ENCODE measurements at regions of chr7 and their contacts with region 1.

Region 1: GRCh38 chr7:95511716-95512260 is 26.0 kb downstream of the ASB4 start:
- DNase-seq: peak; percentile 74
- ATAC-seq: peak; percentile 96
- H3K4me3 ChIP-seq: peak overlapping the region; percentile 14; the same call in 1 of the 2 replicates
- H3K27ac ChIP-seq: no peak overlapping the region
- H3K4me1 ChIP-seq: no peaks in the 10 kb centered on the region
- H3K27me3 ChIP-seq: 0 out of 2 replicates have a peak, but pooled peaks cover 3% of the 10 kb centered on the region
- CTCF ChIP-seq: peak; percentile 86

Region 2: DNA sequence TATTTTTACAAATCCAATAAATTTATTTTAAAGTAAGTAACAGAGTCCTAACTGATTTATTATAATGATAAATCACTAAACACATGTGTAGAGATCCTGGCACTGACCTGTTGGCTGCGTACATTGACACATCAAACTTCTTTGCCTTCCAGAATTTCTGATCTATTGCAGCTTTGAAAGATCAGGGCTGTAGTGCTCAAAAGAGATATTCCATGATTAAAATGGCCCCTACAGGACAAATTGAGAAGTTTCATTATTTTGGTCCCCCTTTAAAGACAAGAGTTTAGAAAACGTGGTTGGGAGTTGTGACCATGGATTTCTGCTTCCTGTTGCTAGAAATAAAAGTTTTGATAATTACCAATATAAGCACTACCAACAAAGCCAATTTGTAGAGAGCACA is 172.2 kb after region 1 on chr7:
- CTCF ChIA-PET with region 1: interaction called, 51 read pairs
- POLR2A ChIA-PET with region 1: interaction called, 7 read pairs
- intact Hi-C with region 1: loop called (anchors 1 kb)
- DNase-seq: peak; percentile 61
- ATAC-seq: peak; percentile 66
- H3K4me3 ChIP-seq: no peak overlapping the region
- H3K27ac ChIP-seq: no peak overlapping the region
- H3K4me1 ChIP-seq: 0 out of 2 replicates have a peak, but pooled peaks cover 5% of the 10 kb centered on the region
- H3K27me3 ChIP-seq: no peaks in the 10 kb centered on the region
- CTCF ChIP-seq: peak; percentile 63

Region 3: GRCh38 chr7:95865716-95866371 is 354.1 kb after region 1 on chr7:
- CTCF ChIA-PET with region 1: no interaction called
- POLR2A ChIA-PET with region 1: no interaction called
- intact Hi-C with region 1: loop called (anchors 10 kb)
- DNase-seq: peak; percentile 50
- ATAC-seq: peak; percentile 91
- H3K4me3 ChIP-seq: no peak overlapping the region
- H3K27ac ChIP-seq: no peak overlapping the region
- H3K4me1 ChIP-seq: peaks cover 7% of the 10 kb centered on the region; the same call in 1 of the 2 replicates
- H3K27me3 ChIP-seq: no peaks in the 10 kb centered on the region
- CTCF ChIP-seq: peak; percentile 60